Spleen (tissue), 13 donors: ENCODE measurements at regions of chr4 and their contacts with region 1.

Region 1: GRCh38 chr4:123661080-123661737 is 264.6 kb downstream of the SPRY1 start:
- DNase-seq: no peak
- H3K4me3 ChIP-seq: no peak overlapping the region
- H3K27ac ChIP-seq: no peak overlapping the region
- H3K4me1 ChIP-seq: no peaks in the 10 kb centered on the region
- H3K27me3 ChIP-seq: no peaks in the 10 kb centered on the region
- CTCF ChIP-seq: peak in 8 of 11 experiments; percentile 30 to 59 (median 41)
- POLR2A ChIP-seq: no peak

Region 2: GRCh38 chr4:123116412-123116811 is 544.8 kb before region 1 on chr4:
- intact Hi-C with region 1: loop called (anchors 10 kb)
- DNase-seq: no peak
- H3K4me3 ChIP-seq: no peak overlapping the region
- H3K27ac ChIP-seq: no peak overlapping the region
- H3K4me1 ChIP-seq: peaks cover 0 to 3% (median 0%) of the 10 kb centered on the region in 6 donors
- H3K27me3 ChIP-seq: no peaks in the 10 kb centered on the region
- CTCF ChIP-seq: no peak
- POLR2A ChIP-seq: no peak